GM12878 (cell line): ENCODE measurements at regions of chr5 and their contacts with region 1.

Region 1: GRCh38 chr5:159106569-159107282 is 7.0 kb upstream of the EBF1 start:
- DNase-seq: no peak
- ATAC-seq: peak; percentile 83
- H3K4me3 ChIP-seq: peak overlapping the region; percentile 61
- H3K27ac ChIP-seq: no peak overlapping the region
- H3K4me1 ChIP-seq: peaks cover 12% of the 10 kb centered on the region
- H3K27me3 ChIP-seq: no peaks in the 10 kb centered on the region; a peak in 2 of 4 replicates
- CTCF ChIP-seq: peak; percentile 84 to 94 (median 92)
- EP300 ChIP-seq: no peak
- POLR2A ChIP-seq: no peak
- RAD21 ChIP-seq: peak; percentile 95

Region 2: GRCh38 chr5:158165638-158166037 is 941.1 kb before region 1 on chr5:
- CTCF ChIA-PET with region 1: interaction called, 137 read pairs
- POLR2A ChIA-PET with region 1: no interaction called
- RAD21 ChIA-PET with region 1: interaction called, 13 read pairs
- SMC1A ChIA-PET with region 1: interaction called, 5 read pairs
- in situ Hi-C with region 1: loop called (anchors 5 kb)
- intact Hi-C with region 1: no loop called
- DNase-seq: no peak
- ATAC-seq: no peak
- H3K4me3 ChIP-seq: no peak overlapping the region
- H3K27ac ChIP-seq: no peak overlapping the region
- H3K4me1 ChIP-seq: no peaks in the 10 kb centered on the region
- H3K27me3 ChIP-seq: peaks cover 2% of the 10 kb centered on the region in 2 experiments; a peak in 2 of 4 replicates
- CTCF ChIP-seq: peak in 2 of 3 experiments; percentile 8 to 14; a peak in 1 of 6 replicates
- EP300 ChIP-seq: no peak
- POLR2A ChIP-seq: no peak
- RAD21 ChIP-seq: no peak

Region 3: DNA sequence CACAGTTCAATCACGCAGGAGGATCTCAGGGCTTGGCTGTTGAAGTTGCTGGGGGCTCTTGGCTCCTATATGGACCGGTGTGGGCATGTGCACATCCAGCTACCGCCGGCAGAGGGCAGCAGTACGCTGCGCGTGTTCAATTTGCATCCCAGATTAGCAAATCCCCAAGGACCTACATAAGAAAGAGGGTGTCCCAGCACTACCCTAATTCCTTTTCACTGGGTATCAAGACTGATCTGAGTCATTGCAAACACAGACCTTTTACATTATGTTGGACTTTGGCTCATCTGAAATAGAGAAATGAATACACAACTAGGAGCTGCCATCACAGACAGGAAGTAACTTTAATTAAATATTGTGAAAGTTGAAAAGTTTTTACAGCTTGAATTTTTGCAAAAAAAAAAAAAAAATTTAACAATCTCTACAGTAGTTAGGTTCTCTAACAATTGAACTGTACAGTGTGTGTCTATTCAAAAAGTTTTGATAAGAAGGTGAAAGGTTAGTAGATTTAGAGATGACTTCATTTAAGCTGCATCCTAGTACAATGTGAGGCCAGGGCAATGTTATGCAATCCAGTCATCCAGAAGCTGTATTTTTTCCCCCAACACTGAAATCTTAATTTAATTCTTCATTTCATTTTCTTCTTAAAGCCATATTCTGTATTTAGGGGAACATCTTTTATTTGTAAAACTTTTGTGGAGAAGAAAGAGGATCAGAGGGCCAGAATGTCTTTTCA is 411.0 kb before region 1 on chr5:
- CTCF ChIA-PET with region 1: interaction called, 195 read pairs
- POLR2A ChIA-PET with region 1: interaction called, 17 read pairs
- RAD21 ChIA-PET with region 1: interaction called, 210 read pairs
- SMC1A ChIA-PET with region 1: interaction called, 224 read pairs
- in situ Hi-C with region 1: loop called (anchors 5 kb)
- intact Hi-C with region 1: loop called (anchors 1 kb)
- DNase-seq: peak; percentile 85
- ATAC-seq: peak; percentile 94
- H3K4me3 ChIP-seq: no peak overlapping the region
- H3K27ac ChIP-seq: no peak overlapping the region
- H3K4me1 ChIP-seq: no peaks in the 10 kb centered on the region
- H3K27me3 ChIP-seq: no peaks in the 10 kb centered on the region
- CTCF ChIP-seq: peak; percentile 88 to 97 (median 88)
- EP300 ChIP-seq: peak; percentile 41 to 66; a peak in 2 of 4 replicates
- POLR2A ChIP-seq: no peak
- RAD21 ChIP-seq: peak; percentile 88

Region 4: DNA sequence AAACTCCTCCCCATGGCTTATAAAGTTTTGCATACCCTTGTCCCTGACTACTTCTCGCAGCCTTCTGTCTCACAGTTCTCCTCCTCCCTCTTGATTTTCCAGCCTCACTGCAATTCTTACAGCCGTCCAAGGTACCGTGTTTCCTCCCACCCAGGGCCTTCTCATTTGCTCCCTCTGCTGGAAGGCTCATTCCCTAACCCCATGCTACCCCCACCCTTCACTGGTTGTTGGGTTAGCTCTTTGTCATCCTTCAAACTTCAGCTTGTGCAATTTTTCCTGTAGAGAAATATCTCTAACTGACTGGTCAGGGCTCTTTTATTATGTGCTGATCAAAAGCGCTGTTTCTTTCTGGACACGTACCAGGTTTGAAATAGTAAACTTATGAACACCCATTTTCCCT is 336.2 kb before region 1 on chr5:
- CTCF ChIA-PET with region 1: interaction called, 12 read pairs
- POLR2A ChIA-PET with region 1: interaction called, 3 read pairs
- RAD21 ChIA-PET with region 1: interaction called, 7 read pairs
- SMC1A ChIA-PET with region 1: interaction called, 10 read pairs
- in situ Hi-C with region 1: no loop called
- intact Hi-C with region 1: no loop called
- DNase-seq: no peak
- ATAC-seq: no peak
- H3K4me3 ChIP-seq: no peak overlapping the region
- H3K27ac ChIP-seq: no peak overlapping the region
- H3K4me1 ChIP-seq: peaks cover 4% of the 10 kb centered on the region; the same call in 1 of the 2 replicates
- H3K27me3 ChIP-seq: no peaks in the 10 kb centered on the region
- CTCF ChIP-seq: peak in 2 of 3 experiments; percentile 17 to 38; a peak in 2 of 6 replicates
- EP300 ChIP-seq: no peak
- POLR2A ChIP-seq: no peak
- RAD21 ChIP-seq: 0 out of 2 replicates have a peak, but pooled peaks have one; percentile 15

Region 5: DNA sequence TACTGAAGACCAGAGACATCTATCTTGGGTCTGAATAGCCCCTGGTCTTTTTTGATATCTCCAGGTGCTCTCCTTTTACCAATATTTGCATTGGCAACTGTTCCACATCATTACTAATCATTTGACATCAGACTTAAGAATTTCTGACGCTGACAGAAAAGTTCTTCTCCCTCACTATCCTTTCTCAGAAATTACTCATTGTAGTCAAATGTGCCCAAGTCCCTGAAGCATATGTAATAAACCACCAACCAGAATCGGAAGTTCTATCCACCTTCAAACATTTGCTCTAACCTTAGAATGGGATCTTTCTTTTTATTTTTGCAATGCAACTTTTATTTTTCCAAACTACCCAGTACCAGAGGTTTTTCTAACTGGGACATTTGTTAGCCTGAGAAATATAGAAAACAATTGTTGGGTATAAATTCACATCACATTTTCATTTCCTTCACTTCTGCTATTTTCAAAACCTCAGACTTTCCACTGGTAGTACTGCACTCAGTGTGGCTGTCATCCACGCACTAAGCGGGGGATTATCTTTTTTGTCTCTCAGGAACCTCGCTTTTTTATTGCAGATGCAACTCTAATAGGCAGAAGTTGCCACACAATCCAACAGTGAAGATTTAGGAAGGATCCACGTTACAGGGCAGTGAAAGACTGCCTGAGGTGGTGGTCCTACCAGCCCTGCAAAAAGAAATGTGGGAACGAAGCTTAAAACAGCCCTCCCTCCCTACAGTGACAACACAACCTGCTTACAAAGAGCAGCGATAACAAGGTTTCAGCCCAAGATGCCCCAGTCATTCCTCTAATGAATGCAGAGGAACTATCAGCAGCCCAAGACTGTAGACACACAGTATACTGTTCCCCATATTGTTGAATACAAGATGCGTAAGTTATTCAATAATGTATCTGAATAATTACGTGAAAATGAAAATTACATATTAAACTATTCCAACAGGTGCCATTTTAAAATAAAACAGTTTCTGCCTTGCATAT is 208.2 kb before region 1 on chr5:
- CTCF ChIA-PET with region 1: interaction called, 10 read pairs
- POLR2A ChIA-PET with region 1: no interaction called
- RAD21 ChIA-PET with region 1: interaction called, 5 read pairs
- SMC1A ChIA-PET with region 1: interaction called, 7 read pairs
- in situ Hi-C with region 1: no loop called
- intact Hi-C with region 1: no loop called
- DNase-seq: no peak
- ATAC-seq: peak; percentile 82
- H3K4me3 ChIP-seq: 0 out of 2 replicates have a peak overlapping the region, but pooled peaks have one; percentile 15
- H3K27ac ChIP-seq: peak overlapping the region; percentile 83
- H3K4me1 ChIP-seq: peaks cover 14% of the 10 kb centered on the region
- H3K27me3 ChIP-seq: no peaks in the 10 kb centered on the region
- CTCF ChIP-seq: no peak
- EP300 ChIP-seq: peak; percentile 70 to 74; a peak in 3 of 4 replicates
- POLR2A ChIP-seq: no peak
- RAD21 ChIP-seq: no peak

Region 6: GRCh38 chr5:159120446-159120845 is 13.7 kb after region 1 on chr5:
- CTCF ChIA-PET with region 1: interaction called, 11 read pairs
- POLR2A ChIA-PET with region 1: interaction called, 3 read pairs
- RAD21 ChIA-PET with region 1: interaction called, 9 read pairs
- SMC1A ChIA-PET with region 1: interaction called, 3 read pairs
- in situ Hi-C with region 1: no loop called
- intact Hi-C with region 1: no loop called
- DNase-seq: no peak
- ATAC-seq: peak; percentile 81
- H3K4me3 ChIP-seq: no peak overlapping the region
- H3K27ac ChIP-seq: no peak overlapping the region
- H3K4me1 ChIP-seq: no peaks in the 10 kb centered on the region
- H3K27me3 ChIP-seq: no peaks in the 10 kb centered on the region
- CTCF ChIP-seq: no peak
- EP300 ChIP-seq: no peak
- POLR2A ChIP-seq: no peak
- RAD21 ChIP-seq: no peak